ENCODE measurements at regions of chr9 and their contacts with region 1.

Region 1: DNA sequence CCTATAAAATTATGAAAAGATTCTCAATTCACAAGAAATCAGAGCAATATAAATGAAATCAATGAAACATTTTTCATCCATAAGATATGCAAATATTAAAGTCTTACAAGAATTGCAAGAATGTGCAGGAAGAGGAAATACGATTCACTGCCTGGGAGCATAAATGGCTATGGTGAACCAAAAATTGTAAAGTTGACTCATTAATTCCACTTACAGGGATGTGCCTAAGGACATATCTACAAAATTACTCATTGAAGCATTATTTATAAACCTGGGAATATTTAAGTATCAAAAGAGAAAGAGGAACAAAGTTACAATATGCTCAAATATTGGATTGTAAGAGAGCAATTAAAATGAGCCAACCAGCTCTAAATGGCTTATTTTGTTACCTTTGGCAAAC is 6.9 kb upstream of the NIPSNAP3A start:
- DNase-seq: no peak
- ATAC-seq: no peak
- H3K4me3 ChIP-seq: no peak overlapping the region
- H3K4me3 Mint-ChIP-seq: no peak overlapping the region
- H3K27ac ChIP-seq: no peak overlapping the region
- H3K27ac Mint-ChIP-seq: no peak overlapping the region
- H3K4me1 ChIP-seq: no peaks in the 10 kb centered on the region
- H3K4me1 Mint-ChIP-seq: no peaks in the 10 kb centered on the region
- H3K27me3 ChIP-seq: no peaks in the 10 kb centered on the region
- H3K27me3 Mint-ChIP-seq: no peaks in the 10 kb centered on the region
- CTCF ChIP-seq: no peak

Region 2: DNA sequence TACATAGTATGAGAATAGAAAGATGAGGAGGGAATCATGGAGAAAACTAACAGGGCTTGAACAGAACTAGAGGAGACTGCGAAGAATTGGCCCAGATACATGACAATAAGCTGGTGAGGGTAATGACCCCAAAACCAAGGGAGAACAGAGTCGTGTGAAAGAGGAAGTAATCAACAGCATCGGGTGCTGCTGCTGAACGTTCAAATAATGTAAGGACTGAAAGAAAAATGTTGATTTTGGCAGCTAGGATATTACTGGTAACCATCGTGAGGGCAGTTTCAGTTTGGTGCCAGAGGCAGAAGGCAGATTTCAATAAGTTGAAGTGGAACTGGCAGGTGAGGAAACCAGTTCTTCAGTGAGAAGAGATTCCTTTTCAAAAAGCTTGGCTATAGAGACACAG is 713.3 kb before region 1 on chr9:
- CTCF ChIA-PET with region 1: no interaction called
- POLR2A ChIA-PET with region 1: no interaction called
- intact Hi-C with region 1: loop called in 1 of 2 experiments (anchors 2 kb)
- DNase-seq: no peak
- ATAC-seq: no peak
- H3K4me3 ChIP-seq: no peak overlapping the region
- H3K4me3 Mint-ChIP-seq: no peak overlapping the region
- H3K27ac ChIP-seq: no peak overlapping the region
- H3K27ac Mint-ChIP-seq: no peak overlapping the region
- H3K4me1 ChIP-seq: no peaks in the 10 kb centered on the region
- H3K4me1 Mint-ChIP-seq: peaks cover 22% of the 10 kb centered on the region
- H3K27me3 ChIP-seq: no peaks in the 10 kb centered on the region
- H3K27me3 Mint-ChIP-seq: peaks cover 7% of the 10 kb centered on the region
- CTCF ChIP-seq: no peak

Measured in CD8-positive, alpha-beta T cell (primary cell).